Activated naive CD4-positive, alpha-beta T cell treated with anti-CD3 and anti-CD28 coated beads, Interleukin-2, amount 10 ng/mL, durations not matched to agents 7 days and 5 days (primary cell): ENCODE measurements at regions of chr4 and their contacts with region 1.

Region 1: DNA sequence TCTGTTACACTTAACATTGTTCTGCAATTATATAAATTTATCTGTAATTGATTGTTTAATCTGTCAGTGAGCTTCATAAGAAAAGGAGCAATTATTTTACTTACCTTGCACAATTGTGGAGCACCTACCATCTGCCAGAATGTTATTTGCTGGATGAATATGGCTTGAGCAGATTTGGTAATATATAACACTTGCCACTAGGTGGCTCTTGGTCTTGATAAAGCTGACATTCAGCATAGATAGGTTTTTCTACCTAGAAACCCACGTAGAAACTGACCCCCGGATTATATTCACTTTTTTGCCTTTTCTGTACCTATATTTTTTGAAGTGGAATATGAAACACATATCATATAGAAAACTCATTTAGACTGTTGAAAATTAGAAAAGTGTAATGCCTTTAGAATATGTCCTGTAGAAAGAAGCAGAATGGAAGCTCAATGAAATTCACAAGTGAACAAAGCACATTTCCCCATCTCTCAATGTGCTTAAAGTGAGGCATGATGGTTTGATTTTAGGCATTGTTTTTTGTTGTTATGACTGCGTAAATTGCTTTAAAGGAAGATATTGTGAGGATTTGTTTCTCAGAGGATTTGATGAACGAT is 9.5 kb downstream of the RBPJ start:
- DNase-seq: no peak
- H3K4me3 Mint-ChIP-seq: no peak overlapping the region
- H3K27ac Mint-ChIP-seq: no peak overlapping the region
- H3K4me1 Mint-ChIP-seq: peaks cover 19% of the 10 kb centered on the region
- H3K27me3 Mint-ChIP-seq: no peaks in the 10 kb centered on the region

Region 2: GRCh38 chr4:26028793-26029567 is 301.3 kb before region 1 on chr4:
- CTCF ChIA-PET with region 1: interaction called, 28 read pairs
- DNase-seq: peak; percentile 75
- H3K4me3 Mint-ChIP-seq: no peak overlapping the region
- H3K27ac Mint-ChIP-seq: no peak overlapping the region
- H3K4me1 Mint-ChIP-seq: peaks cover 9% of the 10 kb centered on the region
- H3K27me3 Mint-ChIP-seq: peaks cover 22% of the 10 kb centered on the region

Region 3: GRCh38 chr4:26201115-26201514 is 129.2 kb before region 1 on chr4:
- CTCF ChIA-PET with region 1: no interaction called
- DNase-seq: no peak
- H3K4me3 Mint-ChIP-seq: no peak overlapping the region
- H3K27ac Mint-ChIP-seq: peak overlapping the region; percentile 72
- H3K4me1 Mint-ChIP-seq: peaks cover 72% of the 10 kb centered on the region
- H3K27me3 Mint-ChIP-seq: peaks cover 8% of the 10 kb centered on the region

Region 4: GRCh38 chr4:26319467-26319948 is 10.8 kb before region 1 on chr4:
- CTCF ChIA-PET with region 1: interaction called, 12 read pairs
- DNase-seq: peak; percentile 100
- H3K4me3 Mint-ChIP-seq: peak overlapping the region; percentile 100
- H3K27ac Mint-ChIP-seq: peak overlapping the region; percentile 100
- H3K4me1 Mint-ChIP-seq: peaks cover 35% of the 10 kb centered on the region
- H3K27me3 Mint-ChIP-seq: peaks cover 4% of the 10 kb centered on the region

Region 5: GRCh38 chr4:26372525-26373172 is 42.4 kb after region 1 on chr4:
- CTCF ChIA-PET with region 1: interaction called, 10 read pairs
- DNase-seq: peak; percentile 54
- H3K4me3 Mint-ChIP-seq: no peak overlapping the region
- H3K27ac Mint-ChIP-seq: no peak overlapping the region
- H3K4me1 Mint-ChIP-seq: peaks cover 32% of the 10 kb centered on the region
- H3K27me3 Mint-ChIP-seq: peaks cover 4% of the 10 kb centered on the region

Region 6: DNA sequence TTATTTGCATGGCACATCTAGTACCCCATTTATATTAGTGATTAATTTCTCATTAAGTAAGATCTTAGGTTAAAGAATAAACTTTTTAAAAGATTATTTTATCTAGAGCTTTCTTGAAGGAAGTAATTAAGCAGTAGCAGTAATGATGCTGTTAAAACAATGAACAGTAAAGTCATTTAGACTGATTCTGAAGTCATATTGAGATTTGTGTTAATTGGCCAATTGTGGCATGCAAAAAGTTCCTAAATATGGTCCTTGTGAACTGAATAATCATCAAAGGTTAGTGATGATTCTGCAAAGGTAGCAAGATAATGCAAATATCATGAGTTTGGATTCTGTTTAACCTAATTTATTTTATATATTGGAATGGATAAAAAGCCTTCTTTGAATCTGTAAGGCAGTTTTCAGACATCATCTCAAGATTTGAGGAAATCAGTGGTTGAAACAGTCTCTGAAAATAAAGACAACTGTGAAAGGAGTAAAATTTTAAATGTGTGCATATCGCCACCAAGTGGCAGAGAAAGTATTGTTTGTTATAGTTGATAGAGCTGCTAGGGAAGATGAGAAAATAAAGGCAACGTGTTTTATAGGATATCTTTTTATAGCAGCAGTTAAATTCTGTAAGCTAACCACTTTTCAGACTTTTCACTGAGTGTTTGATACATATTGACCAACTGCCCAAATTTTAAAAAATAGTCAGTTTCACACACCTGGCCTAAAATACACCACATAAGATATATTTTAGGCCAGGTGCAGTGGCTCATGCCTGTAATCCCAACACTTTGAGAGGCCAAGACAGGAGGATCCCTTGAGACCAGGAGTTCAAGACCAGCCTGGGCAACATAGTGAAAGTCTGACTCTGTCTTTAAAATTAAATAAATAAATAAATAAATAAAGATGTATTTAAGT is 80.4 kb after region 1 on chr4:
- CTCF ChIA-PET with region 1: interaction called, 174 read pairs
- DNase-seq: peak; percentile 44
- H3K4me3 Mint-ChIP-seq: no peak overlapping the region
- H3K27ac Mint-ChIP-seq: peak overlapping the region; percentile 37
- H3K4me1 Mint-ChIP-seq: peaks cover 4% of the 10 kb centered on the region
- H3K27me3 Mint-ChIP-seq: no peaks in the 10 kb centered on the region